ENCODE measurements at regions of chr19 and their contacts with region 1.

Region 1: GRCh38 chr19:33406521-33407139 is 33.1 kb downstream of the CEBPG start:
- DNase-seq: peak; percentile 69 to 89 (median 88)
- ATAC-seq: peak; percentile 83
- H3K4me3 ChIP-seq: no peak overlapping the region
- H3K4me1 ChIP-seq: no peaks in the 10 kb centered on the region
- CTCF ChIP-seq: peak; percentile 91

Region 2: GRCh38 chr19:33125929-33126388 is 280.7 kb before region 1 on chr19:
- intact Hi-C with region 1: no loop called
- DNase-seq: peak in 2 of 3 donors; percentile 38 to 49
- ATAC-seq: peak; percentile 95
- H3K4me3 ChIP-seq: no peak overlapping the region
- H3K4me1 ChIP-seq: no peaks in the 10 kb centered on the region
- CTCF ChIP-seq: peak; percentile 67

Region 3: GRCh38 chr19:33241530-33242101 is 165.0 kb before region 1 on chr19:
- intact Hi-C with region 1: loop called (anchors 5 kb)
- DNase-seq: peak; percentile 53 to 65 (median 59)
- ATAC-seq: peak; percentile 63
- H3K4me3 ChIP-seq: no peak overlapping the region
- H3K4me1 ChIP-seq: peaks cover 11% of the 10 kb centered on the region
- CTCF ChIP-seq: peak; percentile 49

Measured in mucosa of descending colon (tissue), 3 donors.